ENCODE measurements at regions of chr3 and their contacts with region 1.

Region 1: DNA sequence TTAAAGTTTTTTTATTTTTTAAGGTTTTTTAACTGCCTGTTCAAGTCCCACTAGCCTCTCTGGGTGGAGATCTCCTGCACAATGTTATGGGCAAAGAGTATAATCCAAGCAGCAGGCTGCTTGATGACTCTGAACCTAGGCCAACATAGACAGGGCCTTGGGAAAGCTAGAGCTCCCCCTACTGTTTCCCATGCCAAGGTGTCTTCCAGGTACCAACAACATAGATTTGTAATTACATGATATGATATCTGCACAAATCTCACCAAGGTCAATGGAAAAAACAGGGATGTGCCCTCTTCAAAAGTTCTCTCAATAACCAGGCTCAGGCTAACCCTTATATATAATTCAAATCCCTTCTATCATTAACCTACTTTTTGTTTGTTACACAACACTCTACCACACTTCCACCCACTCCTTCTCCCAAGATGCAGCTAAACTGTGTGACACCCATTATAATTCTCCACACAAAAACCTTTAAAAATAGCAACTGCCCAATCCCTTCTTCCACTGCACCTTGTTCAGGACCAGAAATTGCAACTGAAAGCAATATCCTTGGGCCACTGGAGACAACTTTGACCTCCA is 43.8 kb downstream of the RBM15B start:
- DNase-seq: peak; percentile 62
- ATAC-seq: peak; percentile 92
- H3K4me3 Mint-ChIP-seq: no peak overlapping the region
- H3K27ac Mint-ChIP-seq: no peak overlapping the region
- H3K4me1 Mint-ChIP-seq: peaks cover 8% of the 10 kb centered on the region
- H3K27me3 Mint-ChIP-seq: no peaks in the 10 kb centered on the region
- CTCF ChIP-seq: peak; percentile 67

Region 2: GRCh38 chr3:51391075-51391567 is 43.7 kb before region 1 on chr3 and contains the start of gene RBM15B:
- CTCF ChIA-PET with region 1: interaction called, 23 read pairs
- POLR2A ChIA-PET with region 1: interaction called, 3 read pairs
- intact Hi-C with region 1: no loop called
- DNase-seq: peak; percentile 98
- ATAC-seq: peak; percentile 96
- H3K4me3 Mint-ChIP-seq: peak within 1 kb of the TSS; percentile 83
- H3K27ac Mint-ChIP-seq: peak within 1 kb of the TSS; percentile 91
- H3K4me1 Mint-ChIP-seq: peaks cover 68% of the 10 kb centered on the region
- H3K27me3 Mint-ChIP-seq: no peaks in the 10 kb centered on the region
- CTCF ChIP-seq: peak; percentile 78
- total RNA-seq, gene RBM15B: 20.8 to 20.9 TPM

Region 3: DNA sequence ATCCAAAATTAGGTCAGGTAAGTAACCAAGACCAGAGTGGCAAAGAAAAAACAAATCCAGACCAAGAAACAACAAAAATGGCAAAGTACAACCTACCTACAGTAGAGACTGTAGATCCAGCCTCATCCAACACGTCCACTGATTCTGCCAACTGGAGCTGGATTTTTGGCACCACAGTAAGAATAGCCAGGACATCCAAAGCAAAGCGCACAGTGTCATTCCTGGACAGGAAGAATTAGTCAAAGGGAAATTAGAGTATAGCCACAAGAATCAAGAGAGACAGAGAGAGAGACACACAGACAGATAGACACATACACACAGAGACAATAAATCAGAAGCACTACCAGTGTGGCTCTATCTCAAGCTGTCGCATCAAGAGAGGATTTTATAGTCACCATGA is 12.6 kb before region 1 on chr3:
- CTCF ChIA-PET with region 1: interaction called, 17 read pairs
- POLR2A ChIA-PET with region 1: interaction called, 3 read pairs
- intact Hi-C with region 1: no loop called
- DNase-seq: no peak
- ATAC-seq: no peak
- H3K4me3 Mint-ChIP-seq: no peak overlapping the region
- H3K27ac Mint-ChIP-seq: no peak overlapping the region
- H3K4me1 Mint-ChIP-seq: no peaks in the 10 kb centered on the region
- H3K27me3 Mint-ChIP-seq: no peaks in the 10 kb centered on the region
- CTCF ChIP-seq: no peak

Region 4: DNA sequence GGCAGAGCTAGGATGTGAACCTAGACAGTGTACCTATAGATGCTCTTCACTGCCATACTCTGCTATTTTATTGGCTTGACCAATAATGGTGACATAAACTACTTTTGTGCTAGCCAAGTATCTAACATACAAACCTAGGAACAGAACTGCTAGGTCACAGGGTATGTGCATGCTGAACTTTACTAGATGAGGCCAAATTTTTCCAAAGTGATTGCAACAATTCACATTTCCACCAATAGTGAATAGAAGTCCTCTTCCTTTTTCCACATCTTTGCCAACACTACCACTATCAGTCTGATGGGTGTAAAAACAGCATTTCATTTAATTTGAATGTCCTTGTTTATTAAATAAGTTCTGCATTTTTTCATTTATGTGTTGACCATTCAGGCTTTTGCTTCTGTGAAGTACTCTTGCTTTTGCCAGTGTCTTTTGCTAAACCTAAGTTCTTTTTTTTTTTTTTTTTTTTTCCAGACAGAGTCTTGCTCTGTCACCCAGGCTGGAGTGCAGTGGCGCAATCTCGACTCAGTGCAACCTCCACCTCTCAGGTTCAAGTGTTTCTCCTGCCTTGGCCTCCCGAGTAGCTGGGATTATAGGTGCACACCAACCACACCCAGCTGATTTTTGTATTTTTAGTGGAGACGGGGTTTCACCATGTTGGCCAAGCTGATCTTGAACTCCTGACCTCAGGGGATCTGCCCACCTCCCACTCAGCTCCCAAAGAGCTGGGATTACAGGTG is 10.9 kb after region 1 on chr3:
- CTCF ChIA-PET with region 1: interaction called, 29 read pairs
- POLR2A ChIA-PET with region 1: no interaction called
- intact Hi-C with region 1: no loop called
- DNase-seq: no peak
- ATAC-seq: no peak
- H3K4me3 Mint-ChIP-seq: no peak overlapping the region
- H3K27ac Mint-ChIP-seq: no peak overlapping the region
- H3K4me1 Mint-ChIP-seq: peaks cover 24% of the 10 kb centered on the region
- H3K27me3 Mint-ChIP-seq: no peaks in the 10 kb centered on the region
- CTCF ChIP-seq: no peak

Measured in activated CD8-positive, alpha-beta T cell treated with anti-CD3 and anti-CD28 coated beads for 36 hours (primary cell).